ENCODE measurements at regions of chr5 and their contacts with region 1.

Region 1: GRCh38 chr5:134533115-134533815 is 7.8 kb downstream of the JADE2 start:
- DNase-seq: peak; percentile 28 to 72
- ATAC-seq: peak; percentile 22 to 58
- H3K4me3 ChIP-seq: no peak overlapping the region
- H3K27ac ChIP-seq: peak overlapping the region in 3 of 4 donors; percentile 15 to 62 (median 57)
- H3K4me1 ChIP-seq: peaks cover 39 to 45% of the 10 kb centered on the region in 2 donors
- H3K27me3 ChIP-seq: no peaks in the 10 kb centered on the region
- CTCF ChIP-seq: no peak
- POLR2A ChIP-seq: no peak

Region 2: DNA sequence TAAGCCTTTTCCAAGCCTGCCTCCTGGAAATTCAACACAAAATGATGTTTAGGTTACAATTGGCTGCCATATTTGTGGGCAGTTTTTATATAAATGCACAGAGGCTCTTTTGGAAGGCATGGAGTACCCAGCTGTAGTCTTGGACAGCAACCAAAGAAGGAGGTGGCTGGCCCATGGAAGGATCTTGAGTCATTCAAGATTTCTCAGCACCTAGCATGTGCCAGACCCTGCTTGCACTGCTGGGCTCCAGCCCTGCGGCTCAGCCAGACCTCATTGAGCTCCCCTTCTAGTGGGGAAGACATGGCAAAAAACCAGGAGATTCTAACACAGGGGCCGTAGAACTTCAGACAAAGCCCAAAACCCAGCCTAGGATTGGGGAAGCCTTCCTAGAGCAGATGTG is 14.3 kb after region 1 on chr5:
- in situ Hi-C with region 1: no loop called
- intact Hi-C with region 1: loop called (anchors 2 kb)
- DNase-seq: peak; percentile 71 to 82
- ATAC-seq: peak; percentile 99
- H3K4me3 ChIP-seq: no peak overlapping the region
- H3K27ac ChIP-seq: peak overlapping the region; percentile 9 to 48 (median 29)
- H3K4me1 ChIP-seq: peaks cover 41 to 43% of the 10 kb centered on the region in 2 donors
- H3K27me3 ChIP-seq: no peaks in the 10 kb centered on the region
- CTCF ChIP-seq: no peak
- POLR2A ChIP-seq: no peak